Right cardiac atrium (tissue), 5 donors: ENCODE measurements at regions of chr9 and their contacts with region 1.

Region 1: GRCh38 chr9:97921959-97922724 is at the start of gene TRMO:
- DNase-seq: peak; percentile 98 to 99 (median 99)
- ATAC-seq: peak; percentile 96 to 97
- H3K4me3 ChIP-seq: peak within 1 kb of the TSS; percentile 86
- H3K27ac ChIP-seq: peak within 1 kb of the TSS; percentile 98
- H3K4me1 ChIP-seq: no peaks in the 10 kb centered on the region
- H3K27me3 ChIP-seq: no peaks in the 10 kb centered on the region
- total RNA-seq, gene TRMO: 7.7 to 9.5 (median 8.3) TPM

Region 2: DNA sequence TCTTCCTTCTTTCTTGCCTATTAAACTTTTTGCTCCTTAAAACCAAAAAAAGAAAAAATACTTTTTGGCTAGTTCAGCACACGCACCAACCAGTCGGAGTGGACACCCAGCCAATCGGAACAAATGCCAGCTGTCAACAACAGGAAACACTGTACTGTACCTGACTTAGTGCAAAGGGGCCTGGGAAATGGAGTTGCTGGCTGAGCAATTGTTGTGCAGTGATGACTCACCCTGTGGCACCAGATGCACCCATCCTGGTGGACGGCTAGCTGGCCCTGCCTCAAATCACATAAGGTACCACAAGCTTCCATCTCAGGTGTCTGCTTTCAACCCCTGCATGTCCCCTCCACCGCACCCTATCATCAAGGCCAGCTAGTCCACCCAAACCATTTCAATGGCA is 48.3 kb before region 1 on chr9:
- intact Hi-C with region 1: no loop called
- DNase-seq: no peak
- ATAC-seq: no peak
- H3K4me3 ChIP-seq: no peak overlapping the region
- H3K27ac ChIP-seq: no peak overlapping the region
- H3K4me1 ChIP-seq: no peaks in the 10 kb centered on the region
- H3K27me3 ChIP-seq: no peaks in the 10 kb centered on the region

Region 3: DNA sequence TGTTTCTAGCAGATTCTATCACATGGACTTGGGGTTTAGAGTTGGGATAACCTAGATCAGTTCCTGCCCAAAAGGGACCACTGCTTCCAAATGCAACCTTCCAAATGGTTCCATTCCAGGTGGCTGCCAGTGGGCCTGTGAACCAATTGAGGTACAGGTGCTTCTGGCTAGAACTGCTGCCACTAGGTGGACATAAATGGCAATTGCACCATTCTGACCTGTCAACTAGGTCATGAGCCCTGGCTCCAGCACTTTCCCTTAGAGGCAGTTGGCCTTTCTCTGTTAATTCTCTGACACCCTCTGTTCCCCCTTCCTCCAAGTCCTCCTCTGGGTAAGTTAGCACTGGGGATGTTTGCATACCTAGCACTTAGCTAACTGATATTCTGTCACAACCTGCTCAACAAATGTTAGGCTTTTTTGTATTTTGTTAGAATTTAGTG is 32.4 kb after region 1 on chr9:
- intact Hi-C with region 1: no loop called
- DNase-seq: no peak
- ATAC-seq: no peak
- H3K4me3 ChIP-seq: no peak overlapping the region
- H3K27ac ChIP-seq: no peak overlapping the region
- H3K4me1 ChIP-seq: no peaks in the 10 kb centered on the region
- H3K27me3 ChIP-seq: no peaks in the 10 kb centered on the region

Region 4: DNA sequence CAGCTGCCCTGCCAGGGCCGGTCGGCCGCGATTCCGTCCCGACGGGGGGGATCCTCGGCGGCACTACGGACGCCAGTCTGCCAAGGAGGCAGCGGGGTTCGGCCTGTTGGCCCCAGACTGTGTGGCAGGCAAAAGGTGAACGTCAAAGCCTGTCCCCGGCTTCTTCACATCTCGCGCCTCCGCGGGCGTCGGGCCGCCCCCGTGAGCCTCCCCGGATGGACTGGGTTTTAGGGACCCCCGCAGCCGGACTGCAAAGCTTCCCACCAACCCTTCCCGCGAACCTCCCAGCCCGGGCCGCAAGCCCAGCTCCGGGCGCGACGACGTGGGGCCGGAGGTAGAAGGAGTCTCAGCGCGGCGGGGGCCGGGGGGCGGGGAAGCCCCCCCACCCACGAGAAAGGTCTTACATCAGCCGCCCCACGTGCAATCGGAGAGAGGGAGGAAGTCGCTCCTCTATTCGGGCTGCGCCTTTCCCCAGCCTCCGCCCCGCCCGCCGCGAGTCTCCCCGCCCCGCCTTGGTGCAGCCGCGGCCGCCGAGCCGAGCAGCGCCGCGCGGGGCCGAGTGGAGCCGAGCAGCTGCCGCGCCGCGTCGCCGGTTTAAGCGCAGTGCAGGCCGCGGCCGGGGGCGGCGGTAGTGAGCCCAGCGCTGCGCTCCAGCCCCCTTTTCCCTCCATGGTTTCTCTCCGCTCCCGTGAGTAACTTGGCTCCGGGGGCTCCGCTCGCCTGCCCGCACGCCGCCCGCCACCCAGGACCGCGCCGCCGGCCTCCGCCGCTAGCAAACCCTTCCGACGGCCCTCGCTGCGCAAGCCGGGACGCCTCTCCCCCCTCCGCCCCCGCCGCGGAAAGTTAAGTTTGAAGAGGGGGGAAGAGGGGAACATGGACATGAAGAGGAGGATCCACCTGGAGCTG is 60.8 kb after region 1 on chr9 and contains the start of gene ANP32B:
- intact Hi-C with region 1: loop called in 3 of 4 experiments (anchors 5 to 10 kb)
- DNase-seq: peak; percentile 93 to 97 (median 97)
- ATAC-seq: peak; percentile 94
- H3K4me3 ChIP-seq: peak within 1 kb of the TSS; percentile 93
- H3K27ac ChIP-seq: peak within 1 kb of the TSS; percentile 97
- H3K4me1 ChIP-seq: peaks cover 2% of the 10 kb centered on the region
- H3K27me3 ChIP-seq: no peaks in the 10 kb centered on the region
- total RNA-seq, gene ANP32B: 60.4 to 74.5 (median 68.7) TPM

Region 5: GRCh38 chr9:98034593-98035546 is 112.7 kb after region 1 on chr9:
- intact Hi-C with region 1: loop called (anchors 2 to 10 kb)
- DNase-seq: peak; percentile 85 to 94 (median 90)
- ATAC-seq: peak; percentile 83 to 88
- H3K4me3 ChIP-seq: no peak overlapping the region
- H3K27ac ChIP-seq: no peak overlapping the region
- H3K4me1 ChIP-seq: peaks cover 4% of the 10 kb centered on the region
- H3K27me3 ChIP-seq: no peaks in the 10 kb centered on the region

Region 6: GRCh38 chr9:98255578-98256296 is 333.6 kb after region 1 on chr9 and contains the start of gene TBC1D2:
- intact Hi-C with region 1: loop called in 3 of 4 experiments (anchors 5 to 10 kb)
- DNase-seq: peak; percentile 94 to 98 (median 98)
- ATAC-seq: peak; percentile 97 to 98
- H3K4me3 ChIP-seq: peak within 1 kb of the TSS; percentile 77
- H3K27ac ChIP-seq: peak within 1 kb of the TSS; percentile 95
- H3K4me1 ChIP-seq: no peaks in the 10 kb centered on the region
- H3K27me3 ChIP-seq: no peaks in the 10 kb centered on the region
- total RNA-seq, gene TBC1D2: 2.5 to 3.5 (median 3.2) TPM

Region 7: GRCh38 chr9:98263482-98264357 is 341.6 kb after region 1 on chr9:
- intact Hi-C with region 1: loop called in 3 of 4 experiments (anchors 5 to 10 kb)
- DNase-seq: peak; percentile 78 to 90 (median 88)
- ATAC-seq: peak; percentile 93 to 94
- H3K4me3 ChIP-seq: no peak overlapping the region
- H3K27ac ChIP-seq: no peak overlapping the region
- H3K4me1 ChIP-seq: no peaks in the 10 kb centered on the region
- H3K27me3 ChIP-seq: no peaks in the 10 kb centered on the region